ENCODE measurements at regions of chr1 and their contacts with region 1.

Region 1: DNA sequence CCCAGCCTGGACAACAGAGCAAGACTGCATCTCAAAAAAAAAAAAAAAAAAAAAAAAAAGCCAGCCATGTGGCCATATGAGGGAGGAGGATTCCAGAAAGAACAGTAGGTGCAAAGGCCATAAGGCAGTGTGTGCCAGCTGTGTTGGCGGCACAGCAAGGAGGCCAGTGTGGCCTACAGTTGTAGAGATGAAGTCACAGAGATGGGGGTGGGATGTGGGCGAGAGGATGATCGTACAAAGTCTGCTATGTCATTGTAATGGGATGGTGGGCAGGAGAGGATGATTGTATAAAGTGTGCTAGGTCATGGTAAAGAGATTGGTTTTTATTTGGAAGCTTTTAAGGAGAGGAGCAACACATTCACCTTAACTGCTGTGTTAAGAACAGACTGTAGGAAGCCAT is 9.8 kb upstream of the CR1 start:
- DNase-seq: no peak
- ATAC-seq: no peak
- H3K4me3 Mint-ChIP-seq: no peak overlapping the region
- H3K27ac Mint-ChIP-seq: no peak overlapping the region
- H3K4me1 Mint-ChIP-seq: no peaks in the 10 kb centered on the region
- H3K27me3 Mint-ChIP-seq: peaks cover 2% of the 10 kb centered on the region

Region 2: GRCh38 chr1:207234690-207235089 is 251.5 kb before region 1 on chr1:
- CTCF ChIA-PET with region 1: no interaction called
- POLR2A ChIA-PET with region 1: no interaction called
- intact Hi-C with region 1: no loop called
- DNase-seq: no peak
- ATAC-seq: no peak
- H3K4me3 Mint-ChIP-seq: no peak overlapping the region
- H3K27ac Mint-ChIP-seq: no peak overlapping the region
- H3K4me1 Mint-ChIP-seq: peaks cover 2% of the 10 kb centered on the region
- H3K27me3 Mint-ChIP-seq: peaks cover 3% of the 10 kb centered on the region

Region 3: GRCh38 chr1:207429963-207430362 is 56.2 kb before region 1 on chr1:
- CTCF ChIA-PET with region 1: no interaction called
- POLR2A ChIA-PET with region 1: no interaction called
- intact Hi-C with region 1: loop called in 1 of 2 experiments (anchors 5 kb)
- DNase-seq: no peak
- ATAC-seq: no peak
- H3K4me3 Mint-ChIP-seq: no peak overlapping the region
- H3K27ac Mint-ChIP-seq: no peak overlapping the region
- H3K4me1 Mint-ChIP-seq: no peaks in the 10 kb centered on the region
- H3K27me3 Mint-ChIP-seq: peaks cover 14% of the 10 kb centered on the region

Region 4: GRCh38 chr1:208652296-208653160 is 1166.3 kb after region 1 on chr1:
- CTCF ChIA-PET with region 1: no interaction called
- POLR2A ChIA-PET with region 1: no interaction called
- intact Hi-C with region 1: no loop called
- DNase-seq: peak; percentile 49
- ATAC-seq: no peak
- H3K4me3 Mint-ChIP-seq: no peak overlapping the region
- H3K27ac Mint-ChIP-seq: no peak overlapping the region
- H3K4me1 Mint-ChIP-seq: no peaks in the 10 kb centered on the region
- H3K27me3 Mint-ChIP-seq: peaks cover 31% of the 10 kb centered on the region